ENCODE measurements at regions of chr14 and their contacts with region 1.

Region 1: DNA sequence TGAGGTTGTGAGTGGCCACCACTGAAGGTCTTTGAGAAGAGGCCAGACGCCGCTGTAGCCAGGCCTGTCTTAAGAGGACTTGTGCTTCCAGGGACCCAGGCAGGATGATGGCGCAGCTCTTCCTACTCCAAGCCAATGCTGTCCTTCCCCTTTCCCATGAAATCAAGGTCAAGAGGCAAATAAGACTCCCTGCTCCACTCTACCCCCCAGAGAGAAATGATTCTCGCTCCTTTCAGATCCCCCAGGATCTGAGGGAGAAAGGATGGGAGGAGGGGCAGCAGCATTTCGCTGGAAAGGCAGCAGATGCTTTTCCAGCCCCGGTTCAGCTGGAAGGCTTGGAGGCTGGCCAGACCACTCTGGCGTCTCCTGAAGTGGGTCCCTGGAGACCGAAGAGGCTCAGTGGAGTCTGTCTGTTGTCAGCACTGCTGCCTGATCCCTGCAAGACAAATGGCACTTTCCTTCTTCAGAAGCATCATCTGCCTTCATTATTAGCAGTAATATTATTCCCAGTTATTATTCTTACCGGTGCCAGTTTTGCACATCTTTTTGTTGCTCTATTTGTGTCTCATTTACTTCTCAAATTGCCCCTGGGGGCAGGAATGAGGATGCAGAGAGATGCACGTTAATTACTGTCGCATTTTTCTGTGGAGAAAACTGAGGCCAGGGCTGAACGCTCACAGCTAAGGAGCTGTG is 51.4 kb downstream of the C14orf132 start:
- DNase-seq: peak; percentile 89

Region 2: DNA sequence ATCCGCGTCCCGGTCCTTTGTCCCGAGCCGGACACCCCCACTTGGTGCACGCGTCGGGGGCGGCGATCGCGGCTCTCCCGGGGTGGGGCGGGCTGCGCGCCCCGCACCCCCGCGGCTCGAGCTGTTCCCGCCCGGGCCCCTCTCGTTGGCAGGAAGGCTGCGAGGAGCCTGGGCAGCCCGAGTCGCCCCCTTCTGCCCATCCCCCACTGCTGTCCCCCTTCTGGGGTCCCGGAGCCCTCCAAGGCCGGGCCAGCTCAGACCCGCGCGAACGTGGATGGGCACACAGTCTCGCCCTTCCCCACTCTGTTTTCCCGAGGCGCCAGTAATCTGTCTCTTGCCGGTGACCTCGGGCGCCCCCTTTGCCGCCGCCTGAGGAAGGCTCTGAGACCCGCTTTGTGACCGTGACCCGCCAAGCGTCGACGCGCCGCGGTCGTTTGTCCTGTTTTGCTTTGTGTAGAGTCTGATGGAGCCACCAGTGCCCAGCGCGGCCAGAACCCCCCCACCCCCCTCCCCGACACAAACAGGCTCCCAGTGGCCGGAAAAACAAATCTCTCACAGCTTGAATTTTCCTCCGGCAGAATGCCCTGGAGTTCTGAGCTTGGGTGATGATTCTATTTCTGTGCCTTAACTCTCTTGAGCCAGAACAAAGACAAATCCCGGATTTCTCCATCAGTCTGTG is 50.8 kb before region 1 on chr14:
- intact Hi-C with region 1: loop called in 1 of 2 experiments (anchors 5 kb)
- DNase-seq: no peak

Region 3: DNA sequence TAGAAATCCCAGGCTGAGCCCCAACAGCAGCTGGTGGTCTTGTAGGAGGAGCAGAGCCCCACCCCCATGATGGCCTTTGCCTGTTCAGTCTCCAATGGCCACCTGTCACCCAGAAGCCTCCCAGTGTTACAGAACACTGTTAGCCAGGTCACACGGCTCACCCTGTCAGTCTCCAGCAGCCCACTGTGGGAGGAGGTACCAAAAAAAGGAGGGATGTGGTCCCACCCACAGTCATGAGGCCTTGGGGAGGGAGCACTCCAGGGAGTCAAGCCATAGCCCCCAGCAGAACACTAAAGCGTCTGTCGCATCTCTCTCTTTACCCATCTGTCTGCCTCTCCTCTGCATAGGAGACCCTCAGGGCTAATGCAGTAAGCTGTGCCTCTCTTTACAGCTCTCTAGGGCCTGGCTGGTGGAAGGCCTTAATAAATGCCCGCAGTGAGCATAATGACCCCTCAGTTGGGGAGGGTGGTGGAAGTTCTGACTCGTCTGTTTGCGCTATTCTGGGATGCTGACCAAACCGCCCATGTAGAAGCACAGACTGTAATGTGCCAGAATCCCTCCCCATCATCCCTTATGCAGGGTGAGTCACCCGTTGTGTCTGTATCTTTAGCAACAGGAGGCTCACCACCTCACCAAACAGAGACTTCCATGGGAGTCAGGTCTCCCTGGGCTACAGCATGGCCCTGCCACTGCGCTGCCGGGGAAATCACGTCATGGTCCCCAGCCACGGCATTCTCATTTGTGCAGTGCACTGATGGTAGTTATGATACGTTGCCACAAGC is 36.8 kb before region 1 on chr14:
- intact Hi-C with region 1: loop called in 1 of 2 experiments (anchors 5 kb)
- DNase-seq: peak; percentile 89

Region 4: DNA sequence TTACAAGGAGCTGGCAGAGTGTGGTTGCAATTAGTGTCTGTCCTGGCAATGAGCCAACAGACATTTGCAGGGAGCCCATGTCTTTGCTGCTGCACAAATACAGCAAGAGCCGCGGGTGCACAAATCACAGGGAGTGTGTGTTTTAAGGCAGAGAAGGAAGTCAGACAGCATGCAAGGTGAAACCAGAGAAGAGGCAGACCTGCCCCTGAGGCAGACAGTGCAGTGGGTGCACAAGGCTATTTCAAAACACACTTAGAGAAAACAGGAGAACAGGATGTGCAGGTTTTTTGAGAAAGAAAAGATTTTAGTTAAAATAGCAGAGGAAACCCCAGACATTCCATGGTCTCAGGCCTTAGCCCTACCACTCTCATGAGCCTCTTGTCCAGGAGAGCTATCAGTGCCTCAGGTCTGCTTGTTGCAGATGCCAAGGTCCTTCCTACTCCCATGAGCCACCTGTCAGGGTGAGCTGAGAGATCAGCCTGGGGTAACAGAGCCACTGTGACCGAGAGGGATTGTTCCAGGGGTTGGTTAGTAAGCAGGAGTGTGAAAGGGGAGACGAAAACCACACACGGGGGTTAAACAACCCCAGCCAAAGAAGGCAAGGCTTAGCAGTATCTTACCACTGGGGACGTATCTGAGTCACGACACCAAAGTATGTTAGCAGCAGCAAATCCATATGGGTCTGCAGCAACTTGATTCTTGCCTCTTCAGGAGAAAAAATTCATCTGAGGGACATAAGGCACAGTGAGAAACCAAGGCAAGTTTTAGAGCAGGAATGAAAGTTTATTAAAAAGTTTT is 26.7 kb after region 1 on chr14:
- intact Hi-C with region 1: no loop called
- DNase-seq: peak; percentile 54

Region 5: DNA sequence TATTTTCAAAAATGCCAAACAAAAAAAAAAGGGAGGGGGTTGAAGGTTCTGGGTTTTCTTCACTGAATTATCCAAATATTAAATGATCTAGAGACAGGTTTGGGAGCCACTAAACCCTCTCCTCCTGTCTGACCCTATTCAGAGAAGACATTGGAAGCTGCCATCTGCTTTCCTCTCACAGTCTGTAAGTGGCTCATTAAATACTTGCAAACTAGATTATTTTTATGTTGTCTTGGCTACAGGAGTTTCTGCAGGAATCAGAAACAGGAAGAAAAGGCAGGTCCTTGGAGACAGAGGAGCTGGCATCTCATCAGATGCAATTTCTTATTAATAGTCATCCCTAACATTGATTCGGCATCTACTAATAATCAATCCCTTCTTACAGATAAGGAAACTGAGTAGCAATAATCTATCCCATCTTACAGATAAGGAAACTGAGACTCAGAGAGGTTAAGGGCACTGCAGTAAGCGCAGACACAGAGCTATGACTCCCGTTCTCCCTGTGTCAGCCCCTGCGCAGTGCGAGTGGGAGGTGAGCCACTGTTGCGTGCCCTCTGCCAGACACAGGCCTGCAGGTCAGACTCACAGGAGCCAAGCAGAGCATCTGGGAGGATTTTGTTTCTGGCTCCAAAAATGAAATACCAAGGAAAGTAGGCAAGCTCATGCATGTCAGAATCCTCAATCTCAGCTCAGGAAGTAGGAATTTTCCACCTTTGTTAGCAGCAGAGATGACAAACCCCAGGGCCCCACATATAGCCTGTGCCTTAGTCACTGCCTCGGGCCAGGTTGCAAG is 125.1 kb after region 1 on chr14:
- intact Hi-C with region 1: no loop called
- DNase-seq: no peak